HepG2 (cell line): ENCODE measurements at regions of chr6 and their contacts with region 1.

Region 1: GRCh38 chr6:17987576-17988421 is at the start of gene KIF13A:
- DNase-seq: peak; percentile 54
- ATAC-seq: peak; percentile 82
- H3K4me3 ChIP-seq: peak within 1 kb of the TSS; percentile 80 to 99 (median 92)
- H3K27ac ChIP-seq: peak within 1 kb of the TSS; percentile 88
- H3K4me1 ChIP-seq: peaks cover 40% of the 10 kb centered on the region
- H3K27me3 ChIP-seq: no peaks in the 10 kb centered on the region; a peak in 1 of 5 replicates
- CTCF ChIP-seq: peak; percentile 27; the same call in 1 of the 2 replicates
- EP300 ChIP-seq: no peak
- POLR2A ChIP-seq: peak; percentile 18 to 31; a peak in 1 of 4 replicates
- RAD21 ChIP-seq: peak; percentile 71
- total RNA-seq, gene KIF13A: 37.2 and 48.3 TPM in 2 replicates

Region 2: DNA sequence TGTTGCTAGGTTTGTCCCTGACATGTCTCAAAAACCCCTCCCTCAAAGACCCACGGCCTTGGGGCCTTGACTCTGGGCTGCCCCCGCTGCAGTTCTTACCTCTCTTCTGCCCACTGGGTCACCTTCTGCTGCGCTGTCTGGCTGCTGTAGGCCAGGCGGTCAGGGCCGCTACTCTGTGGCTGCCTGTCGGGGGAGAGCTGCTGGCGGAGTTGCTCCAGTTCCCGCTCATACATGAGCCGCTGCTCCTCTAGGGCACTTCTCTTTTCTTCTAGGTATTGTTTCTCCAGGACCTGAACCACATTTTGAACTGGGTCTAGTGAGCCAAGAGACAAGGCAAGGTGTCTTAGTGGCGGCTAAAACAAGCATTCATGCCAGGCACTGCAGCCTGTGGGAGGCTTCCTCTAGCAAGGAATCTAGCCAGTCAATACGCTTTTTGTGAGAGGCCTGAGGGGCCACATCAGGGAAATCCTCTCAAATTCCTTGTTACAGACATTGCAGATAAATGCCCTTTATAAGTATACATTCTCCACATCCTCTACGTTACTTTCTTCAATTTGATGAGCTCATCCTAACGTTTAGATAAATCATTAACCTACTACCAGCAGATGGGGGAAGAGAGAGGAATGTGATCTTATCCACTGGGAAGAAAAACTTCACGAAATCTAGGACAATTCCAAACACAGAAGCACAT is 170.7 kb before region 1 on chr6:
- CTCF ChIA-PET with region 1: no interaction called
- POLR2A ChIA-PET with region 1: no interaction called
- in situ Hi-C with region 1: no loop called
- intact Hi-C with region 1: loop called (anchors 1 kb)
- DNase-seq: peak; percentile 75
- ATAC-seq: peak; percentile 66
- H3K4me3 ChIP-seq: no peak overlapping the region
- H3K27ac ChIP-seq: no peak overlapping the region
- H3K4me1 ChIP-seq: peaks cover 14% of the 10 kb centered on the region
- H3K27me3 ChIP-seq: no peaks in the 10 kb centered on the region
- CTCF ChIP-seq: no peak; the same call in 1 of the 2 replicates
- EP300 ChIP-seq: no peak
- POLR2A ChIP-seq: no peak
- RAD21 ChIP-seq: no peak

Region 3: DNA sequence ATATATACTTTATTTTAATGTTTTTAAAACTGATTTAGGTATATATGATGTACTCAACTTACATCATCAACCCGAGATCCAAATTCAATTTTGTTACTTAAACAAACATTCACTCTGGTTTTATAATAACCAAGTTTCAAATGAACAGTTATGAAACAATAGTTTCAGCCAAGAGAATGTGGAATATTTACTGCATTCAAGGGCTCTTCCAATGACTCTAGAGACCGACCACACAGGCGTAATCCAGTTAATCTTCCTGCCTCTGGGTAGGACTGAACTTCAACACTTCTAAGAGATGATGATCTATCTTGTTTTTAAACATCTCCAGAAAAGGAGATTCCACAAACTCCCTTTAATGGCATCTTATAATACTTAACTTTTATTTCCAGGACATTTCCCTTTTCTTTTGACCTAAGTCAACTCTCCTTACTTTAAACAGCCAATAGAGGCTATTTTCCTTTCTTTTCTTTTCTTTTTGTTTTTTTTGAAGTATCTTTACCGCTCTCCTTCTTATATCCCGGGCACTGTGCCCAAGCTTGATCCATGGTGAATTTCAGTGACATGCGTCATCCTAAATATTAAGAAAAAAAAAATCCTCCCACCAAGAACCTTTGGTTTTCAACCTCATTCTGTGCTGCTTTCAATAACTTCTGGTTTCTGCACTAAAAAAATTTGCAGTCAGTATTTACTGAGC is 110.5 kb before region 1 on chr6:
- CTCF ChIA-PET with region 1: no interaction called
- POLR2A ChIA-PET with region 1: interaction called, 4 read pairs
- in situ Hi-C with region 1: no loop called
- intact Hi-C with region 1: loop called (anchors 5 kb)
- DNase-seq: no peak
- ATAC-seq: no peak
- H3K4me3 ChIP-seq: no peak overlapping the region
- H3K27ac ChIP-seq: no peak overlapping the region
- H3K4me1 ChIP-seq: peaks cover 41% of the 10 kb centered on the region
- H3K27me3 ChIP-seq: no peaks in the 10 kb centered on the region
- CTCF ChIP-seq: no peak
- EP300 ChIP-seq: no peak
- POLR2A ChIP-seq: no peak
- RAD21 ChIP-seq: no peak

Region 4: DNA sequence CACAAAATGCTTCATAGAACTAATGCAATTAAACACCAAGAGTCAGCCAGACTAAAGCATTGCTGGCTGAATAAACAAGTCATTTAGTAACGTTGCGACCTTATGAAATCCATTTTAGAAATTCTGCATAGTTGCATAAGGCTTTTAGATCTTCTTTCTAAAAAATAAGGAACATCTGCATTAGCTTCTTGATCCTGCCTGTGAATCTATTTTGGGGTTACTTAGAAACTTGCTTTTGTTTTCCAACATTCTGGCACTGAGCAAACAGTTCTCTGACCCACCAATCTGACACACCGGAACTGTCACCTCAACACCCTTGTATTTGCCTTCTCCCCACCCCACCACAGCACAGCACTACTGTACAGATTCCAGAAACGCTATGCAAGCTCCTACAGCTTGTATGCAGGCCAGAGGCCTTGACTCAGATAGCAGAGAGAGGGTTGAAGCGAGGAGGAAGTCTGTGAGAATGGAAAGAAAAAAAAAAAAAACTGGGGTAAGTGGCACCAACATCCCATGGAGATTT is 55.4 kb before region 1 on chr6:
- CTCF ChIA-PET with region 1: no interaction called
- POLR2A ChIA-PET with region 1: interaction called, 3 read pairs
- in situ Hi-C with region 1: no loop called
- intact Hi-C with region 1: loop called (anchors 2 kb)
- DNase-seq: peak; percentile 92
- ATAC-seq: peak; percentile 97
- H3K4me3 ChIP-seq: peak overlapping the region in 1 of 3 experiments; percentile 26; a peak in 1 of 6 replicates
- H3K27ac ChIP-seq: peak overlapping the region; percentile 73
- H3K4me1 ChIP-seq: peaks cover 68% of the 10 kb centered on the region
- H3K27me3 ChIP-seq: no peaks in the 10 kb centered on the region
- CTCF ChIP-seq: peak; percentile 24; the same call in 1 of the 2 replicates
- EP300 ChIP-seq: peak in 1 of 2 experiments; percentile 79; a peak in 2 of 4 replicates
- POLR2A ChIP-seq: no peak
- RAD21 ChIP-seq: 0 out of 2 replicates have a peak, but pooled peaks have one; percentile 33

Region 5: GRCh38 chr6:18122124-18123093 is 134.6 kb after region 1 on chr6 and contains the start of gene NHLRC1:
- CTCF ChIA-PET with region 1: no interaction called
- POLR2A ChIA-PET with region 1: no interaction called
- in situ Hi-C with region 1: loop called (anchors 5 kb)
- intact Hi-C with region 1: loop called (anchors 1 kb)
- DNase-seq: peak; percentile 84
- ATAC-seq: peak; percentile 96
- H3K4me3 ChIP-seq: peak within 1 kb of the TSS; percentile 52 to 67 (median 52)
- H3K27ac ChIP-seq: no peak within 1 kb of the TSS
- H3K4me1 ChIP-seq: peaks cover 24% of the 10 kb centered on the region
- H3K27me3 ChIP-seq: no peaks in the 10 kb centered on the region; a peak in 1 of 5 replicates
- CTCF ChIP-seq: peak; percentile 100
- EP300 ChIP-seq: peak; percentile 36 to 56; a peak in 2 of 4 replicates
- POLR2A ChIP-seq: no peak; a peak in 1 of 4 replicates
- RAD21 ChIP-seq: peak; percentile 99
- total RNA-seq, gene NHLRC1: 0.11 and 0.20 TPM in 2 replicates